ENCODE measurements at regions of chr2 and their contacts with region 1.

Region 1: GRCh38 chr2:177263451-177264208 is 897 bp downstream of the NFE2L2 start:
- DNase-seq: peak; percentile 96
- ATAC-seq: peak; percentile 63
- H3K4me3 Mint-ChIP-seq: peak overlapping the region; percentile 90
- H3K27ac Mint-ChIP-seq: peak overlapping the region; percentile 96
- H3K4me1 Mint-ChIP-seq: peaks cover 54% of the 10 kb centered on the region
- H3K27me3 Mint-ChIP-seq: no peaks in the 10 kb centered on the region
- CTCF ChIP-seq: peak; percentile 81

Region 2: GRCh38 chr2:177212106-177212890 is 51.3 kb before region 1 on chr2 and contains the start of gene HNRNPA3:
- CTCF ChIA-PET with region 1: interaction called, 12 read pairs
- POLR2A ChIA-PET with region 1: interaction called, 54 read pairs
- intact Hi-C with region 1: loop called (anchors 2 kb)
- DNase-seq: peak; percentile 99
- ATAC-seq: peak; percentile 86
- H3K4me3 Mint-ChIP-seq: peak within 1 kb of the TSS; percentile 88
- H3K27ac Mint-ChIP-seq: peak within 1 kb of the TSS; percentile 98
- H3K4me1 Mint-ChIP-seq: peaks cover 34% of the 10 kb centered on the region
- H3K27me3 Mint-ChIP-seq: no peaks in the 10 kb centered on the region
- CTCF ChIP-seq: no peak
- total RNA-seq, gene HNRNPA3: 292 to 308 TPM

Region 3: GRCh38 chr2:177229448-177230242 is 34.0 kb before region 1 on chr2:
- CTCF ChIA-PET with region 1: interaction called, 12 read pairs
- POLR2A ChIA-PET with region 1: interaction called, 40 read pairs
- intact Hi-C with region 1: loop called (anchors 5 kb)
- DNase-seq: no peak
- ATAC-seq: peak; percentile 40
- H3K4me3 Mint-ChIP-seq: no peak overlapping the region
- H3K27ac Mint-ChIP-seq: peak overlapping the region; percentile 36
- H3K4me1 Mint-ChIP-seq: peaks cover 39% of the 10 kb centered on the region
- H3K27me3 Mint-ChIP-seq: no peaks in the 10 kb centered on the region
- CTCF ChIP-seq: no peak

Region 4: GRCh38 chr2:177275041-177276020 is 11.7 kb after region 1 on chr2:
- CTCF ChIA-PET with region 1: interaction called, 14 read pairs
- POLR2A ChIA-PET with region 1: interaction called, 33 read pairs
- intact Hi-C with region 1: no loop called
- DNase-seq: no peak
- ATAC-seq: no peak
- H3K4me3 Mint-ChIP-seq: no peak overlapping the region
- H3K27ac Mint-ChIP-seq: no peak overlapping the region
- H3K4me1 Mint-ChIP-seq: peaks cover 24% of the 10 kb centered on the region
- H3K27me3 Mint-ChIP-seq: no peaks in the 10 kb centered on the region
- CTCF ChIP-seq: no peak

Region 5: DNA sequence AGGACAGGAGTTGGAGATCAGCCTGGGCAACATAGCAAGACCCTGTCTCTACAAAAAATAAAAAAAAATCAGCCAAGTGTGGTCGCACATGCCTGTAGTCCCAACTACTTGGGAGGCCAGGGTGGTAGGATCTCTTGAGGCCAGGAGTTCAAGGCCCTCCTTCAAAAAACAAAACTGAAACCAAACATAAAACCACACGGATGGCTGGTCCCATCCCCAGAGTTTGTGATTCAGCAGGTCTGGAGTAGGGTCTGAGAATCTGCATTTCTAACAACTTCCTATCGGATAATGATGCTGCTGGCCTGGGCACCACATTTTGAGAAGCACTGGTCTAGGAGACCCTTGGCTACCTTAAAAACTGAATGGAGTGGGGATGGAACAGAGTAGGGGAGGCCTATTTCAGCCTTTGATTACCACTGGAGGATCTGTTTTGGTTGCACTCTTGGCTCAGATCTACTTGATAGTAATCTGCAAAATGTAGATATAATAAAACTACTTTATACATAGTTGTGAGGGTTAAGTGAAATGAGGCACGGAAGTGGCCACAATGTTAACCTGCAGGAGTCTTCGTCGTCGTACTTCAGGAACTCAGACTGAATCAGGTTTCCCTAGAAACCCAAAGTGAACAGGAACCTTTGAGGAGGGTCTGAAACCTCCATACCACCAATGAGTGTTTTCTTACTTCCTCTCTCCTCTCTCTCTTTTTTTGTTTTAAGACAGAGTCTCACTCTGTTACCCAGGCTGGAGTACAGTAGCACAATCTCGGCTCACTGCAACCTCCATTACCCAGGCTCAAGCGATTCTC is 26.4 kb after region 1 on chr2:
- CTCF ChIA-PET with region 1: interaction called, 58 read pairs
- POLR2A ChIA-PET with region 1: interaction called, 24 read pairs
- intact Hi-C with region 1: loop called (anchors 2 kb)
- DNase-seq: peak; percentile 35
- ATAC-seq: peak; percentile 75
- H3K4me3 Mint-ChIP-seq: peak overlapping the region; percentile 28
- H3K27ac Mint-ChIP-seq: peak overlapping the region; percentile 88
- H3K4me1 Mint-ChIP-seq: peaks cover 27% of the 10 kb centered on the region
- H3K27me3 Mint-ChIP-seq: no peaks in the 10 kb centered on the region
- CTCF ChIP-seq: no peak

Region 6: GRCh38 chr2:177332041-177332991 is 68.7 kb after region 1 on chr2:
- CTCF ChIA-PET with region 1: interaction called, 32 read pairs
- POLR2A ChIA-PET with region 1: interaction called, 13 read pairs
- intact Hi-C with region 1: loop called (anchors 5 kb)
- DNase-seq: peak; percentile 51
- ATAC-seq: peak; percentile 92
- H3K4me3 Mint-ChIP-seq: no peak overlapping the region
- H3K27ac Mint-ChIP-seq: no peak overlapping the region
- H3K4me1 Mint-ChIP-seq: peaks cover 7% of the 10 kb centered on the region
- H3K27me3 Mint-ChIP-seq: no peaks in the 10 kb centered on the region
- CTCF ChIP-seq: peak; percentile 79

Measured in activated CD8-positive, alpha-beta T cell treated with anti-CD3 and anti-CD28 coated beads for 36 hours (primary cell).